ENCODE measurements at regions of chr22 and their contacts with region 1.

Region 1: GRCh38 chr22:40346178-40347118 is at the start of gene ADSL:
- DNase-seq: peak; percentile 33 to 90
- H3K4me3 ChIP-seq: peak within 1 kb of the TSS; percentile 66 to 93
- H3K27ac ChIP-seq: peak within 1 kb of the TSS; percentile 66 to 90
- H3K4me1 ChIP-seq: peaks cover 9 to 19% of the 10 kb centered on the region in 2 donors
- H3K27me3 ChIP-seq: no peaks in the 10 kb centered on the region
- CTCF ChIP-seq: peak in 1 of 3 experiments; percentile 17
- total RNA-seq, gene ADSL: 31.3 TPM

Region 2: GRCh38 chr22:39896313-39896996 is 450.0 kb before region 1 on chr22:
- intact Hi-C with region 1: no loop called
- DNase-seq: no peak
- H3K4me3 ChIP-seq: no peak overlapping the region
- H3K27ac ChIP-seq: no peak overlapping the region
- H3K4me1 ChIP-seq: no peaks in the 10 kb centered on the region
- H3K27me3 ChIP-seq: no peaks in the 10 kb centered on the region
- CTCF ChIP-seq: no peak

Region 3: DNA sequence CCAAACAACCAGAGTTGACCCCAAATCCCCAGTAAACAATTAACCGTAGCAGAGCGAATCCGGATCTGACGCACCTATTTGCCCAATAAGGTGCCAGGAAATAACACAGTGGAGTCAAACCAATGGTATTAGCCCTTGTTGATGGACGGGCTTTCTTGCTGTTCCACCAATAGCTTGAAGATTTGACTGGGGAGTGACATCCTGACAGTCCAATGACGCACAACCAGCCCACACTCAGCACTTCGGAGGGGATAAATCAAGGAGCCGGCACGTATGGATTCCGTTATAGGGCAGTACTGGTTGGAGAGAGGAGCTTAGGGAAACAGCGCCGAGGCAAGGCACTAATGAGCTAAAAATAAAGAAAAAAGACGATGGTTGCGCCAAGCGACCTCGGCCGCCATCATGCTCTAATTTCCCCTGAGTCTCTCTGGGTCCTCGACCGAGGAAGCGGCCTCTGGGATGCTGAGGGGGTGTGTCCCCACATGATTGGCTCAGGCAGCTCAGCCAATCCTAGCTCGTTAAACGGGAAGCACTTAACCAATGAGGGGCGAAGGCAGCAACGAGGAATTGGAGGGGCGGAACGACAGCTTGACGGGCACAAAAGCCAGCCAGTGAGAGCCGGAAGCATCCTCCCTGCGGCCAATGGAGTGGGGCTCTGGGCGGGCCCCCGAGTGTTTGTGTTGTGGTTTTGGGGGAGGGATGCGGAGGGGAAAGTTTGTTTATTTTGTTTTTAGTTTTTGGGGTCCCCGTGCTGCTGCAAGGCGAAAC is 302.2 kb before region 1 on chr22:
- intact Hi-C with region 1: loop called (anchors 1 kb)
- DNase-seq: peak; percentile 97 to 99
- H3K4me3 ChIP-seq: peak overlapping the region; percentile 91 to 96
- H3K27ac ChIP-seq: peak overlapping the region; percentile 85 to 93
- H3K4me1 ChIP-seq: peaks cover 0 to 8% of the 10 kb centered on the region in 2 donors
- H3K27me3 ChIP-seq: no peaks in the 10 kb centered on the region
- CTCF ChIP-seq: no peak

Measured in ascending aorta (tissue), 2 donors.